ENCODE measurements at regions of chr1 and their contacts with region 1.

Region 1: GRCh38 chr1:223123011-223123610 is 19.9 kb downstream of the TLR5 start:
- DNase-seq: no peak
- ATAC-seq: no peak
- H3K4me3 ChIP-seq: peak overlapping the region; percentile 13 to 29
- H3K4me3 Mint-ChIP-seq: peak overlapping the region; percentile 63
- H3K27ac ChIP-seq: no peak overlapping the region
- H3K27ac Mint-ChIP-seq: no peak overlapping the region
- H3K4me1 ChIP-seq: no peaks in the 10 kb centered on the region
- H3K4me1 Mint-ChIP-seq: peaks cover 6% of the 10 kb centered on the region
- H3K27me3 ChIP-seq: no peaks in the 10 kb centered on the region
- H3K27me3 Mint-ChIP-seq: no peaks in the 10 kb centered on the region
- CTCF ChIP-seq: no peak

Region 2: GRCh38 chr1:222465211-222466041 is 657.7 kb before region 1 on chr1:
- CTCF ChIA-PET with region 1: interaction called, 3 read pairs
- POLR2A ChIA-PET with region 1: no interaction called
- intact Hi-C with region 1: loop called (anchors 2 to 5 kb)
- DNase-seq: peak; percentile 66 to 89 (median 71)
- ATAC-seq: peak; percentile 94
- H3K4me3 ChIP-seq: peak overlapping the region; percentile 54 to 68
- H3K4me3 Mint-ChIP-seq: peak overlapping the region; percentile 85
- H3K27ac ChIP-seq: peak overlapping the region; percentile 58 to 65
- H3K27ac Mint-ChIP-seq: peak overlapping the region; percentile 93
- H3K4me1 ChIP-seq: peaks cover 6% of the 10 kb centered on the region
- H3K4me1 Mint-ChIP-seq: peaks cover 14% of the 10 kb centered on the region
- H3K27me3 ChIP-seq: no peaks in the 10 kb centered on the region
- H3K27me3 Mint-ChIP-seq: no peaks in the 10 kb centered on the region
- CTCF ChIP-seq: peak; percentile 100

Region 3: GRCh38 chr1:222792744-222793143 is 330.4 kb before region 1 on chr1:
- CTCF ChIA-PET with region 1: interaction called, 24 read pairs
- POLR2A ChIA-PET with region 1: no interaction called
- intact Hi-C with region 1: loop called (anchors 1 to 2 kb)
- DNase-seq: peak in 2 of 9 experiments; percentile 27 to 49
- ATAC-seq: no peak
- H3K4me3 ChIP-seq: no peak overlapping the region
- H3K4me3 Mint-ChIP-seq: no peak overlapping the region
- H3K27ac ChIP-seq: no peak overlapping the region
- H3K27ac Mint-ChIP-seq: no peak overlapping the region
- H3K4me1 ChIP-seq: no peaks in the 10 kb centered on the region
- H3K4me1 Mint-ChIP-seq: no peaks in the 10 kb centered on the region
- H3K27me3 ChIP-seq: no peaks in the 10 kb centered on the region
- H3K27me3 Mint-ChIP-seq: no peaks in the 10 kb centered on the region
- CTCF ChIP-seq: peak; percentile 62

Region 4: GRCh38 chr1:223088713-223089240 is 34.3 kb before region 1 on chr1:
- CTCF ChIA-PET with region 1: interaction called, 12 read pairs
- POLR2A ChIA-PET with region 1: no interaction called
- intact Hi-C with region 1: no loop called
- DNase-seq: no peak
- ATAC-seq: no peak
- H3K4me3 ChIP-seq: no peak overlapping the region
- H3K4me3 Mint-ChIP-seq: no peak overlapping the region
- H3K27ac ChIP-seq: no peak overlapping the region
- H3K27ac Mint-ChIP-seq: no peak overlapping the region
- H3K4me1 ChIP-seq: peaks cover 6% of the 10 kb centered on the region
- H3K4me1 Mint-ChIP-seq: peaks cover 11% of the 10 kb centered on the region
- H3K27me3 ChIP-seq: no peaks in the 10 kb centered on the region
- H3K27me3 Mint-ChIP-seq: no peaks in the 10 kb centered on the region
- CTCF ChIP-seq: no peak

Region 5: GRCh38 chr1:223142795-223143536 is 19.9 kb after region 1 on chr1 and contains the start of gene TLR5:
- CTCF ChIA-PET with region 1: interaction called, 60 read pairs
- POLR2A ChIA-PET with region 1: no interaction called
- intact Hi-C with region 1: no loop called
- DNase-seq: peak; percentile 75 to 94 (median 90)
- ATAC-seq: peak; percentile 91
- H3K4me3 ChIP-seq: peak within 1 kb of the TSS; percentile 54
- H3K4me3 Mint-ChIP-seq: peak within 1 kb of the TSS; percentile 73
- H3K27ac ChIP-seq: peak within 1 kb of the TSS; percentile 21 to 25
- H3K27ac Mint-ChIP-seq: peak within 1 kb of the TSS; percentile 52
- H3K4me1 ChIP-seq: peaks cover 16% of the 10 kb centered on the region
- H3K4me1 Mint-ChIP-seq: peaks cover 21% of the 10 kb centered on the region
- H3K27me3 ChIP-seq: no peaks in the 10 kb centered on the region
- H3K27me3 Mint-ChIP-seq: no peaks in the 10 kb centered on the region
- CTCF ChIP-seq: peak; percentile 28
- total RNA-seq, gene TLR5: 1.1 to 1.2 TPM

Region 6: DNA sequence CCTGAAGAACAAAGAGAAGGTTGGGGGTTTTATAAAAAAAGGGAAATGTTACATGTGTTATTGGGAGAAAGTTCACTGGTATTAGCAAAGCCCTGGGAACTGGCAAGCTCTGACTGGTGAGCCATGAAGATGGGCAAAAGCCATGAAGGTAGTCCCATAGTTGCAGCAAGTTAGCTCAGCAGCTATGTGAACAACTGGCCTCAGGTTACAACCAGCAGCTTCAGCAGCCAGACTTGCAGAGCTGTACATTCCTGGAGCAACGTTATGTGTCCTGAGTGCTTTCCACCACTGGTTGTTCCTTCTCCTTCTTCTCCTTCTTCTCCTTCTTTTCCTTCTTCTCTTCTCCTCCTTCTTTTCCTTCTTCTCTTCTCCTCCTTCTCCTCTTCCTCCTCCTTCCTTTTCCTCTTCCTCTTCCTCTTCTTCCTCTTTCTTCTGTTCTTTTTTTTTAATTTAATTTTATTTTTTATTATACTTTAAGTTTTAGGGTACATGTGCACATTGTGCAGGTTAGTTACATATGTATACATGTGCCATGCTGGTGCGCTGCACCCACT is 76.1 kb after region 1 on chr1:
- CTCF ChIA-PET with region 1: no interaction called
- POLR2A ChIA-PET with region 1: no interaction called
- intact Hi-C with region 1: no loop called
- DNase-seq: no peak
- ATAC-seq: no peak
- H3K4me3 ChIP-seq: no peak overlapping the region
- H3K4me3 Mint-ChIP-seq: no peak overlapping the region
- H3K27ac ChIP-seq: no peak overlapping the region
- H3K27ac Mint-ChIP-seq: no peak overlapping the region
- H3K4me1 ChIP-seq: no peaks in the 10 kb centered on the region
- H3K4me1 Mint-ChIP-seq: no peaks in the 10 kb centered on the region
- H3K27me3 ChIP-seq: no peaks in the 10 kb centered on the region
- H3K27me3 Mint-ChIP-seq: no peaks in the 10 kb centered on the region
- CTCF ChIP-seq: no peak

Measured in CD8-positive, alpha-beta T cell (primary cell).